B cell (primary cell): ENCODE measurements at regions of chr5 and their contacts with region 1.

Region 1: GRCh38 chr5:95781101-95781583 is 41.4 kb downstream of the GLRX start:
- DNase-seq: peak; percentile 86
- ATAC-seq: peak; percentile 99
- H3K4me3 ChIP-seq: peak overlapping the region in 1 of 5 experiments; percentile 11
- H3K4me3 Mint-ChIP-seq: peak overlapping the region; percentile 64
- H3K27ac ChIP-seq: no peak overlapping the region
- H3K27ac Mint-ChIP-seq: peak overlapping the region; percentile 11
- H3K4me1 ChIP-seq: peaks cover 0 to 4% of the 10 kb centered on the region in 2 donors
- H3K4me1 Mint-ChIP-seq: peaks cover 5% of the 10 kb centered on the region
- H3K27me3 ChIP-seq: no peaks in the 10 kb centered on the region
- H3K27me3 Mint-ChIP-seq: no peaks in the 10 kb centered on the region
- CTCF ChIP-seq: peak; percentile 96

Region 2: DNA sequence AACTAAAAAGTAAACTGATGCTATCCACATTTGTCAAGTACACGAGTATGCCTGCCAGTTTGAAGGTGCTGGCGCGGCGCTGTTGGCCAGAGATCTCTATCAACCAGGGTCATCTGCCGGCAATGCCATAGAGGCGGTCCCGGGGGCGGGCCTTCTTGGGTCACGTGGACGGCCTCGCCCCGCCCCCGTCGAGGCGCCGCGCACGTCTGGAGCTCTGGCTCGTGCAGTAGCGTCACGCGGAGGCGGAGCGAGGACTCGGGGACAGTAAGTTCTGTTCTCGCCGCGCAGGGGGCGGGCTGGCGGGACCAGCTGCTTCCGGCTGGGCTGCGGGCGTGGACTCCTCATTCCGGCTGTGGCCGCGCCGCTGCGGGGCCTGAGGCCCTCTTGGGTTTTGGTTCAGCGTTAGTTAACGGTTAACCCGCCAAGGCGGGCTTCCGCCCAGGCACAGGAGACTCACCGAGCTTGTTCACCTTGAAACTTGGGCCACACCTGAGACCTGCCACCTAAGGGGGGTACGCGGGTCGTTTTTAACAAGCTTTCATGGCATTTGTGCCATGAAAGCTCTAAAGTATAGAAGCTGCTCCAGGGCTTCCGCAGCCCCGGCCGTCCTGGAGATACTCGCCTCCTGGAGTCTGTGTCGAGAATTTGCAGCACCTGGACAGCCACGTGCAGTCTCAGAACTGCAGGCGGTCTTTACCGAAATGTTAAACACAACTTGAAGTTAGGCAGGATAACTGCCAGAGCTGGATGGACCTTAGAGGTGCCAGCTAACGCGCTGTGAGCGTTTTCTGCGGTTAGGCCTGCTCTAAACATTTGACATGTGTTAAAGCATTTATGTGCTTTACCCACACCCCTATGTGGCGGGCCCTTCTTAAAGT is 134.3 kb before region 1 on chr5 and contains the start of gene RFESD:
- CTCF ChIA-PET with region 1: interaction called, 86 read pairs
- POLR2A ChIA-PET with region 1: interaction called, 4 read pairs
- intact Hi-C with region 1: loop called (anchors 1 kb)
- DNase-seq: peak; percentile 95
- ATAC-seq: peak; percentile 97
- H3K4me3 ChIP-seq: peak within 1 kb of the TSS; percentile 56 to 87 (median 80)
- H3K4me3 Mint-ChIP-seq: peak within 1 kb of the TSS; percentile 90
- H3K27ac ChIP-seq: peak within 1 kb of the TSS; percentile 68 to 75
- H3K27ac Mint-ChIP-seq: peak within 1 kb of the TSS; percentile 93
- H3K4me1 ChIP-seq: peaks cover 14 to 20% of the 10 kb centered on the region in 2 donors
- H3K4me1 Mint-ChIP-seq: peaks cover 18% of the 10 kb centered on the region
- H3K27me3 ChIP-seq: no peaks in the 10 kb centered on the region
- H3K27me3 Mint-ChIP-seq: no peaks in the 10 kb centered on the region
- CTCF ChIP-seq: peak; percentile 28
- total RNA-seq, gene RFESD: 1.9 and 3.0 TPM in 2 replicates

Region 3: GRCh38 chr5:95760273-95761191 is 20.6 kb before region 1 on chr5:
- CTCF ChIA-PET with region 1: interaction called, 26 read pairs
- POLR2A ChIA-PET with region 1: interaction called, 6 read pairs
- intact Hi-C with region 1: no loop called
- DNase-seq: peak; percentile 56
- ATAC-seq: peak; percentile 77
- H3K4me3 ChIP-seq: peak overlapping the region in 4 of 5 experiments; percentile 13 to 66 (median 38)
- H3K4me3 Mint-ChIP-seq: peak overlapping the region; percentile 91
- H3K27ac ChIP-seq: peak overlapping the region; percentile 70 to 82
- H3K27ac Mint-ChIP-seq: peak overlapping the region; percentile 93
- H3K4me1 ChIP-seq: peaks cover 29 to 34% of the 10 kb centered on the region in 2 donors
- H3K4me1 Mint-ChIP-seq: peaks cover 38% of the 10 kb centered on the region
- H3K27me3 ChIP-seq: no peaks in the 10 kb centered on the region
- H3K27me3 Mint-ChIP-seq: no peaks in the 10 kb centered on the region
- CTCF ChIP-seq: no peak

Region 4: DNA sequence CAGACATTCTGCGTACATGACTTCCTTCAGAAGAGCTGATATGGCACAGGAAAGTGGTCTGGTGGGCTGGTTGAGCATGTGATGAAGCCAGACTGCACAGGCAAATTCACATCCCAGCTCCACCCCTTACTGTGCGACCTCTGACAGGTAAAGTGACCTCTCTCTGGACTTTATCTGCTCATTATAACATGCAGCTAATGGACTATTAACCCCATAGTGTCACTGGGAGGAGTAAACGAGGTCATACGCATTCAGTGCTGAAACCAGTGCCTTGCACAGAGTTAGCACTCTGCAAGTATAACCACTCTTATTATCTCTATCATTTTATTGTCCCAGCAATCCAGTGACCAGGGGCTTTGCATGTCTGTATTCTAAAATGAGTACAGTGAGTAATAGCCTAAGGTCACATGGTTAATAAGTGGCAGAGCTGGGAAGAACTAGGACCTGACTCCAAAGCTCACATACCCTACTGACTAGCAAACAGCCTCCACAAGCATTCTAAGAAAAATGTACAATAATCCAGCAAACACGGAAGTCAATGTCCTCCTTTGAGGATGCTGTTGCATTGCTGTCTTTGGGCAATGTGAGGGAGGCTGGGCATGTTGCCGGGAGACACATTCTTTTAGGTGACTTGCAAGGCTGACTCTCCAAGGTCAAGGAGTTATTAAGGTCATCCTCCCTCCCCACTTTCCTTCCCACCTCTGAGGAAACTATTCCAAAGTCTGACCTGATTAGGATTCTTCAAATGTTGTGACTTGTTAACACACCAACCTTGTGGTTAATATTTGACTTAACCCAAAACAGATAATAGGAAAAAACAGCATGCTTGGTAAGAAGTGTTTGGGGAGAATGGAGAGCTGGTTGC is 22.4 kb after region 1 on chr5:
- CTCF ChIA-PET with region 1: interaction called, 82 read pairs
- POLR2A ChIA-PET with region 1: no interaction called
- intact Hi-C with region 1: no loop called
- DNase-seq: no peak
- ATAC-seq: no peak
- H3K4me3 ChIP-seq: no peak overlapping the region
- H3K4me3 Mint-ChIP-seq: no peak overlapping the region
- H3K27ac ChIP-seq: no peak overlapping the region
- H3K27ac Mint-ChIP-seq: no peak overlapping the region
- H3K4me1 ChIP-seq: peaks cover 12 to 13% of the 10 kb centered on the region in 2 donors
- H3K4me1 Mint-ChIP-seq: peaks cover 13% of the 10 kb centered on the region
- H3K27me3 ChIP-seq: no peaks in the 10 kb centered on the region
- H3K27me3 Mint-ChIP-seq: no peaks in the 10 kb centered on the region
- CTCF ChIP-seq: no peak

Region 5: DNA sequence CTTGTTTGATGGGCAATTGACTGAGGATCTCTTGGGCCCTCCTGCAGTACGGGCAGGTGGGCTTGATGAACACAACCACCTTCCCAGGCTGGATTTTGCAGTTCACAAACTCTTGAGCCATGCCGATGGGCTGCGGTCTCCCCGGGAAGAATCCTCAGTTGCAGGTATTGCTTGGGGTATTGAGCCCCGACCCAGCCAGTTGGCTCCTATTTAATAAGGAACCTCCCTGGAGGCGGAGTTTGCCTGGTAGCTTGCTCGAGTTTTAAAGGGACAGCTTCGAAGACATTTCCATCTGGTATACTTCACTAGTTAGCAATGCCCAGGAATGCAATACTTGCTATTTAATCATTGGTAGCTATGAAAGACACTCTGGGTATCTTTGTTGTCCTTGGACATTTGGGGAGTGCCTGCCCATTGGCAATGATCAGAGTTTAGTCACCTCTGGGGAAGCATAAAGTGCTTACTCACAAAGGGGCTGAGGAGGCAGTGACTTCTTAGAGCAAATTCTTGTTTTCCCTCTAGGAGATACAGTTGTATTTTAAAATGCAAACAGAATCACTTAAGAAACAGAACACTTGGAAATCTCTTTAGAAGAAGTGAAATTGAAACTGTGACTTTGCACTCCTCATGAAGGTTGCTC is 41.5 kb after region 1 on chr5 and contains the start of gene GLRX:
- CTCF ChIA-PET with region 1: interaction called, 65 read pairs
- POLR2A ChIA-PET with region 1: interaction called, 5 read pairs
- intact Hi-C with region 1: loop called (anchors 1 kb)
- DNase-seq: peak; percentile 63
- ATAC-seq: peak; percentile 41
- H3K4me3 ChIP-seq: peak within 1 kb of the TSS; percentile 70 to 100 (median 97)
- H3K4me3 Mint-ChIP-seq: peak within 1 kb of the TSS; percentile 99
- H3K27ac ChIP-seq: peak within 1 kb of the TSS; percentile 67 to 90
- H3K27ac Mint-ChIP-seq: peak within 1 kb of the TSS; percentile 99
- H3K4me1 ChIP-seq: peaks cover 52 to 59% of the 10 kb centered on the region in 2 donors
- H3K4me1 Mint-ChIP-seq: peaks cover 70% of the 10 kb centered on the region
- H3K27me3 ChIP-seq: no peaks in the 10 kb centered on the region
- H3K27me3 Mint-ChIP-seq: no peaks in the 10 kb centered on the region
- CTCF ChIP-seq: no peak
- total RNA-seq, gene GLRX: 44.6 and 50.0 TPM in 2 replicates

Region 6: DNA sequence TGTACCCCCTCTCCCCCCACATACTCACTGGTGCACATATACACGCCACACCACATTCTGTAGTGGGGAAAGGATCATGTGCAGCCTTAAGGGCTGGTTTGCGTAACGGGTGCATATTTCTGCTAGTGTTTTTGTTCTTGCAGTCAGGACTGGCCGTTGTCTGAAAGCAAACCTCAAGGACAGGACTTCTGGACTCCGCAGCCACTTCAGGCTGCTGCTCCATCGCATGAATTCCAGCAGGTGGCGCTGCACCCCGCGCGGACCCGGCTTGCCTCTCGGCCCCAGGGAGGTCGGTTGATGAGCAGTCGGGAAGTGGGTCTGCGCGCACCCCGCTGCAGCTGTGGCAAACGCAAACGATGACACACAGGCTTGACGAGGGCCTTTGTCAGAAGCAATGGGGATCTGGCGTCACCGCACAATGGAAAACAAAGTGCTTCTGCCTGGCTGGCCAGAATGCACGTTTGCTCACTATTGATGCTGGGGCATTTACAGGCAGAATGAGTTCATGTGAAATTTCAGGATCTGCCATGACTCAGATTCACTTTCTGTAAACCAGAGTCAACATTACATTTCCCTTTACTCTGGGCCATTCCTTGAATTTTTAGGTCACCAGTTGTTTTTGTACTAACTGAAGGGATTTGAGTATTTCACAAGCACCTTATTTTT is 77.7 kb after region 1 on chr5:
- CTCF ChIA-PET with region 1: interaction called, 748 read pairs
- POLR2A ChIA-PET with region 1: no interaction called
- intact Hi-C with region 1: no loop called
- DNase-seq: peak; percentile 89
- ATAC-seq: peak; percentile 94
- H3K4me3 ChIP-seq: peak overlapping the region in 3 of 5 experiments; percentile 7 to 25 (median 18)
- H3K4me3 Mint-ChIP-seq: peak overlapping the region; percentile 76
- H3K27ac ChIP-seq: no peak overlapping the region
- H3K27ac Mint-ChIP-seq: no peak overlapping the region
- H3K4me1 ChIP-seq: peaks cover 15 to 18% of the 10 kb centered on the region in 2 donors
- H3K4me1 Mint-ChIP-seq: peaks cover 30% of the 10 kb centered on the region
- H3K27me3 ChIP-seq: peaks cover 0 to 6% (median 1%) of the 10 kb centered on the region in 4 experiments
- H3K27me3 Mint-ChIP-seq: peaks cover 11% of the 10 kb centered on the region
- CTCF ChIP-seq: peak; percentile 97

Region 7: GRCh38 chr5:95900383-95900958 is 119.3 kb after region 1 on chr5:
- CTCF ChIA-PET with region 1: no interaction called
- POLR2A ChIA-PET with region 1: no interaction called
- intact Hi-C with region 1: no loop called
- DNase-seq: no peak
- ATAC-seq: no peak
- H3K4me3 ChIP-seq: no peak overlapping the region
- H3K4me3 Mint-ChIP-seq: no peak overlapping the region
- H3K27ac ChIP-seq: no peak overlapping the region
- H3K27ac Mint-ChIP-seq: no peak overlapping the region
- H3K4me1 ChIP-seq: no peaks in the 10 kb centered on the region
- H3K4me1 Mint-ChIP-seq: no peaks in the 10 kb centered on the region
- H3K27me3 ChIP-seq: no peaks in the 10 kb centered on the region
- H3K27me3 Mint-ChIP-seq: no peaks in the 10 kb centered on the region
- CTCF ChIP-seq: no peak

Region 8: DNA sequence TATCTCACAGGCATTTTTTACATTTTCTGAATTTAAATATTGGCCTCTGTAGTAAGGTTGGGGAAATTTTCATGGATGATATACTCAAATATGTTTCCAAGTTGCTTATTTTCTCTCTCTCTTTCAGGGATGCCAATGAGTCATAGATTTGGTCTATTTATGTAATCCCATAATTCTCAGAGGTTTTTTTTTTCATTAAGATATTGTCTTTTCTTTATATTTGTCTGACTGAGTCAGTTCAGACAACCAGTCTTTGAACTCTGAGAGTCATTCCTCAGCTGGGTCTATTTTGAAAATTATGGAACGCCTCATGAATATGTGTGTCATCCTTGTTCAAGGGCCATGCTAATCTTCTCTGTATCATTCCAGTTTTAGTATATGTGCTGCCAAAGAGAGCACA is 428.7 kb after region 1 on chr5:
- CTCF ChIA-PET with region 1: no interaction called
- POLR2A ChIA-PET with region 1: no interaction called
- intact Hi-C with region 1: no loop called
- DNase-seq: no peak
- ATAC-seq: no peak
- H3K4me3 ChIP-seq: no peak overlapping the region
- H3K4me3 Mint-ChIP-seq: no peak overlapping the region
- H3K27ac ChIP-seq: no peak overlapping the region
- H3K27ac Mint-ChIP-seq: no peak overlapping the region
- H3K4me1 ChIP-seq: no peaks in the 10 kb centered on the region
- H3K4me1 Mint-ChIP-seq: no peaks in the 10 kb centered on the region
- H3K27me3 ChIP-seq: no peaks in the 10 kb centered on the region
- H3K27me3 Mint-ChIP-seq: peaks cover 10% of the 10 kb centered on the region
- CTCF ChIP-seq: no peak